A549 (cell line): ENCODE measurements at regions of chr2 and their contacts with region 1.

Region 1: DNA sequence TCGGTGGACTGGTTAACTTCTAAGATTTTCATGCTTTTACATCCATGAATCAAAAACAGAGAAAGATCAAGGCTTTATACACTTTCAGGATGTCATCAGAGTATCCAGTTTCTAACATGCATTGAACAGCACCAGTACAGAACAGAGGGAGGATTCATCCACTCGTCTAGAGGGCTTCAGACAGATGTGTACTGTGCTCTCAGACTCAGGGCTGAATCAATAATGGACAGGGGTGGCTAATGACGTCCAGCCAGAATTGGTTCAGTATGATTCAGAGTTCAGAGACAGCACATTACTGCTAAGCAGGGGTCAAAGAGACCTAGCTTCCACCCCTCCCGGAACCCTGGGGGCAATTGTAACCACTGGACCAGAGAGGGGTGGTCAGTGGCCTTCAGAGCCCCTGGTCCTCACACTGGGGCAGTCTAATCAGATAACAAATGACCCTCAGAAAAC is 37.3 kb downstream of the RNU4ATAC start:
- DNase-seq: no peak
- ATAC-seq: peak; percentile 43 to 67; a peak in 3 of 6 replicates
- H3K4me3 ChIP-seq: no peak overlapping the region
- H3K27ac ChIP-seq: no peak overlapping the region
- H3K4me1 ChIP-seq: peaks cover 3% of the 10 kb centered on the region
- CTCF ChIP-seq: no peak
- EP300 ChIP-seq: no peak
- POLR2A ChIP-seq: no peak
- RAD21 ChIP-seq: no peak

Region 2: DNA sequence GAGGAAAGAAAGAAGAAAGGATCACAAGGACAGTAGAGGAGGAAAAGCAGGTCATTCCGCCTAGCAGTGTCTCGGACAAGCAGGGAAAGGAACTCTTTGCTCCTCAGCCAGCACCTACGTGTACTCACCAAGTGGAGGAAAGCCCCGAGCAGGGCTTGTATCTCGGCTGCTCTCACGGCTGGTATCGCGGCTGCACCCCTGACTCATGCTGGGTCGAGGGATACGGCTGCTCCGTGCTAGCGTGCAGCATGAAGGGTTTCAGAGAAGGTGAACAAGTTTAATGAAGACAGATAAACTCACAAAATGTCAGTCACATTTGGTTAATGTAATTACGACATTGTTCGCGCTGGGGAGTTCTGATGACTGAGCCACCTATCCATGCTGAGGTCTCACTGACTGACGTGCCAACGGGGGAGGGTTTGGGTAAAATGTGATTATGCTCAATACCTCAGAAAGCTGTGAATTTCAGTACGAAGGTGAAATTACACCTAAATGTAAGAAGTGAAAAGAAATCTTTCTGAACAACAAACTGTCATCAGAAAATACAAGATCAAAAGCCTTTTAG is 149.4 kb before region 1 on chr2:
- CTCF ChIA-PET with region 1: no interaction called
- POLR2A ChIA-PET with region 1: no interaction called
- DNase-seq: no peak
- ATAC-seq: no peak
- H3K4me3 ChIP-seq: no peak overlapping the region
- H3K27ac ChIP-seq: no peak overlapping the region
- H3K4me1 ChIP-seq: no peaks in the 10 kb centered on the region
- CTCF ChIP-seq: no peak
- EP300 ChIP-seq: no peak
- POLR2A ChIP-seq: no peak
- RAD21 ChIP-seq: no peak

Region 3: DNA sequence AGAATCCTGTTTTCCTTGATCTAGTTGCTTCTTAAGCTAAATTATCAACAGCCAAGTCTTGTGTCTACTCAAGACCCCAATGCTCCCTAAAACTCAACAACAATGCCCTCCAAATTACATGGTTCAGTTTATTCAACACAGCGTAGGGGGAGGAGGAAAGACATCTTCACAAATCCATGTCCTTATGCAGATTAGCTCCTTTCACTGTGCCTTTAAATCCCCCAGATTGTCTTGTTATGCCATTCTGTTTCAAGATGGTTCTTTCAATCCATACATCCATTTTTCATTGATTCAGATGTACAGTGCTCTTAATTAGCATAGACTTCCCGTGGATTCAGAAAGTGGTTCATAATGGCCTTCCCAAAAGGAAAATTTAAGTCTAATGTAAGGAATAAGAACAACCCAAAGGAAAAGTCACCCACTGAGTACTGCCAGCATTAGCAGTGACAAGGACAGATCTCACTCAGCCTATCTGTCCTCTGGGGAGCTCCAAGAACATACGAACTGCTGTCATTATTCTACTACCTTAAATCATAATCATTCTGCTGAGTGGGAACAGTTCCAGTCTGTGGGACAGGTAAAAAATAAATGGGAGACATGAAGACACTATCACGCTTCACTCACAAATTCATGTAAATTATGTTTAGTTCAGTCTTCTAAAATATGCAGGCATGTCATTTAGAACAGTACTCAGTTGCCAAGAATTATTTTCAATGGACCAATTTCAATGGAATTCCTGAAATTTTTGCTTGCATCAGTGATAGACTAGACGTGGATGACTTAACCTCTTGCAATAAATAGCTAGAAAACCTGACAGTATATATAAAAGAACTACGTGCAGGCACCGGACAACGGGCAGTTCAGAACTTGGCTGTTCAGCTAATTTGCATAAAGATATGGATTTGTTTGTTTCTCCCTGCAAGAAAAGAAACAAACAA is 96.2 kb before region 1 on chr2:
- CTCF ChIA-PET with region 1: no interaction called
- POLR2A ChIA-PET with region 1: no interaction called
- DNase-seq: no peak
- ATAC-seq: no peak
- H3K4me3 ChIP-seq: no peak overlapping the region
- H3K27ac ChIP-seq: no peak overlapping the region
- H3K4me1 ChIP-seq: peaks cover 30% of the 10 kb centered on the region
- CTCF ChIP-seq: no peak
- EP300 ChIP-seq: no peak
- POLR2A ChIP-seq: no peak
- RAD21 ChIP-seq: no peak

Region 4: GRCh38 chr2:121699421-121700333 is 131.7 kb after region 1 on chr2:
- CTCF ChIA-PET with region 1: no interaction called
- POLR2A ChIA-PET with region 1: no interaction called
- DNase-seq: peak; percentile 76 to 78
- ATAC-seq: peak; percentile 94 to 98
- H3K4me3 ChIP-seq: 0 out of 3 replicates have a peak overlapping the region, but pooled peaks have one; percentile 20
- H3K27ac ChIP-seq: peak overlapping the region; percentile 73 to 87
- H3K4me1 ChIP-seq: peaks cover 30% of the 10 kb centered on the region
- CTCF ChIP-seq: no peak
- EP300 ChIP-seq: peak in 1 of 2 experiments; percentile 32; a peak in 1 of 5 replicates
- POLR2A ChIP-seq: no peak
- RAD21 ChIP-seq: no peak

Region 5: GRCh38 chr2:121768143-121768755 is 200.3 kb after region 1 on chr2:
- CTCF ChIA-PET with region 1: no interaction called
- POLR2A ChIA-PET with region 1: interaction called, 10 read pairs
- DNase-seq: no peak
- ATAC-seq: no peak
- H3K4me3 ChIP-seq: no peak overlapping the region
- H3K27ac ChIP-seq: no peak overlapping the region
- H3K4me1 ChIP-seq: no peaks in the 10 kb centered on the region
- CTCF ChIP-seq: no peak
- EP300 ChIP-seq: no peak
- POLR2A ChIP-seq: no peak
- RAD21 ChIP-seq: no peak